ENCODE measurements at regions of chr21 and their contacts with region 1.

Region 1: GRCh38 chr21:17780539-17780938 is 38.6 kb downstream of the C21orf91 start:
- DNase-seq: peak in 1 of 2 donors; percentile 86
- ATAC-seq: peak; percentile 53 to 75 (median 71)
- H3K4me3 ChIP-seq: no peak overlapping the region
- H3K4me3 Mint-ChIP-seq: peak overlapping the region; percentile 49
- H3K27ac ChIP-seq: peak overlapping the region; percentile 59
- H3K27ac Mint-ChIP-seq: peak overlapping the region; percentile 91 to 92
- H3K4me1 ChIP-seq: peaks cover 47% of the 10 kb centered on the region
- H3K4me1 Mint-ChIP-seq: peaks cover 77 to 78% of the 10 kb centered on the region in 2 donors
- H3K27me3 ChIP-seq: no peaks in the 10 kb centered on the region
- H3K27me3 Mint-ChIP-seq: no peaks in the 10 kb centered on the region
- CTCF ChIP-seq: no peak

Region 2: DNA sequence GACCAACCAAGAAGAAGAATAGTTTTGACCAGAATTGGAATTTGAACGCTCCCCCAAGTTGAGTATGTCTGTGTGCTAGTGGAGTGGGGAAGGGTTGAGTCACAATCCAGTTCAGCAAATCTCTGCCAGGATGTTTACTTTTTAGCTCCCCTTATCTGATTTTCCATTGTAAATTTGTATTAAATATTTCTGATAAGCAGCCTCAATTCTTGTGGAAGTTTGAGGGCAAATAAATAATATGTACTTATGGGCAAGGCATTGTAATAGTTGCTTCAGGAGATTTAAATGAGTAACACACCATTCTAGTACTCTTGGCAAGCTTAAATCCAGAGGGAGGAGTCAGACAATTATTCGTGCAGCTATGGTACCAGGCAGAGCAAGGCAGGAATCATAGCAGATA is 253.3 kb before region 1 on chr21:
- intact Hi-C with region 1: no loop called
- DNase-seq: no peak
- ATAC-seq: no peak
- H3K4me3 ChIP-seq: no peak overlapping the region
- H3K4me3 Mint-ChIP-seq: no peak overlapping the region
- H3K27ac ChIP-seq: no peak overlapping the region
- H3K27ac Mint-ChIP-seq: no peak overlapping the region
- H3K4me1 ChIP-seq: no peaks in the 10 kb centered on the region
- H3K4me1 Mint-ChIP-seq: no peaks in the 10 kb centered on the region
- H3K27me3 ChIP-seq: no peaks in the 10 kb centered on the region
- H3K27me3 Mint-ChIP-seq: peaks cover 0 to 6% of the 10 kb centered on the region in 2 donors
- CTCF ChIP-seq: no peak

Region 3: GRCh38 chr21:17611414-17612022 is 169.0 kb before region 1 on chr21:
- intact Hi-C with region 1: loop called (anchors 5 kb)
- DNase-seq: peak; percentile 74 to 92
- ATAC-seq: peak; percentile 57 to 71 (median 63)
- H3K4me3 ChIP-seq: peak overlapping the region; percentile 91
- H3K4me3 Mint-ChIP-seq: peak overlapping the region; percentile 95
- H3K27ac ChIP-seq: peak overlapping the region; percentile 77
- H3K27ac Mint-ChIP-seq: peak overlapping the region; percentile 91 to 99
- H3K4me1 ChIP-seq: peaks cover 19% of the 10 kb centered on the region
- H3K4me1 Mint-ChIP-seq: peaks cover 12 to 23% of the 10 kb centered on the region in 2 donors
- H3K27me3 ChIP-seq: no peaks in the 10 kb centered on the region
- H3K27me3 Mint-ChIP-seq: no peaks in the 10 kb centered on the region
- CTCF ChIP-seq: no peak

Region 4: DNA sequence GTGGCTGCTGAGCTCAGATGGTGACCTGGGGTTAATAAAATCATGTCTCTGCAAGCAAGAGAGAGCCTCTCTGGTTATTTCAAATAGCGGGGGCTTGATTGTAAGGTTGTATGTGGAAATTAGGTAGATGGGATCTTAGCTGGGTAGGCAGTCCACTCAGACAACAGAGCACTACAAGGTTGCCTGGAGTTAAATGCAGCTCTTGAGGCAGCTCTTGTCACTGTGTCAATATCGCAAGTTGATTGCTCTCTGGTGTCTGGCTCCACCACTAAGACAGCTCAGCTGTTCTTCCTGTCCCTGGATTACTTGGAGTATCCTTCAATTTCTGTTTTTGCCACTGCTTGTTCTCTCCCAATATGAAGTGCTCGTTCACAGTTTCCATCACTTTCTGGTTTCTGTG is 55.2 kb before region 1 on chr21:
- intact Hi-C with region 1: no loop called
- DNase-seq: no peak
- ATAC-seq: no peak
- H3K4me3 ChIP-seq: no peak overlapping the region
- H3K4me3 Mint-ChIP-seq: no peak overlapping the region
- H3K27ac ChIP-seq: no peak overlapping the region
- H3K27ac Mint-ChIP-seq: no peak overlapping the region
- H3K4me1 ChIP-seq: no peaks in the 10 kb centered on the region
- H3K4me1 Mint-ChIP-seq: peaks cover 6% of the 10 kb centered on the region in 2 donors
- H3K27me3 ChIP-seq: no peaks in the 10 kb centered on the region
- H3K27me3 Mint-ChIP-seq: no peaks in the 10 kb centered on the region
- CTCF ChIP-seq: no peak

Region 5: DNA sequence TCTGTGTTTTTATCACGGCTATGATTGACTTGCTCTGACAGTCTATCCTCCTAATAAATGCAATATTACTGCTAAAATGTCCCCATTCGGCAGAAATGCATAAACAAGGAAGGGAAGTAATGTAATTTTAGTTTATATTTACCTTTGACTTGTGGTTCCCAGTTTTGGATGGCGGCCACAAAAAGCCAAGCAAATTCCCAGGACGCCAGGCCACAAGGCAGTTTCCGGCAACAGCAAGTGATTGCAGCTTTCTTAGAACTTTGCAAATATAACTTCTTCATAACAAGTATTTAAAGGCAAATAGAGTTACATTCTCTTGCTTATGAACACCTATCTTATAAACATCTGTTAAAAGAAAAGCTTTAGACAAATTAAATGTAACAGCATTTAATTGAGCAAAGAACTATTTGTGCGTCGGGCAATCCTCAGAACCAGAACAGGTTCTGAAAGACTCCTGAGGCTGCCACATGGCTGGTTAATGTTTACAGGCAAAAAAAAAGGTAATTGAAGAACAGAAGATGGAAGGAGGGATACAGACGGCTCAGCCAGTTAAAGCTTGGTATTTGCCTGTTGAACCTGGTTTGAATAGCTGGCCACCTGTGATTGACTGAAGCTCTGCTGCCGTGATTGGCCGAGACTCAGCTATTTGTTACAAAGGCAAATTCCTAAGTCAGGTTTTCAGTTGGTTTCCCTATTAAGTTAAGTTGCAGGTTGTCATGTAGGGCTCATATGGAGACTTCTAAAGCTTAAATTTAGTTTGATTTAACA is 42.2 kb before region 1 on chr21:
- intact Hi-C with region 1: no loop called
- DNase-seq: no peak
- ATAC-seq: no peak
- H3K4me3 ChIP-seq: no peak overlapping the region
- H3K4me3 Mint-ChIP-seq: no peak overlapping the region
- H3K27ac ChIP-seq: no peak overlapping the region
- H3K27ac Mint-ChIP-seq: no peak overlapping the region
- H3K4me1 ChIP-seq: no peaks in the 10 kb centered on the region
- H3K4me1 Mint-ChIP-seq: peaks cover 0 to 9% of the 10 kb centered on the region in 2 donors
- H3K27me3 ChIP-seq: no peaks in the 10 kb centered on the region
- H3K27me3 Mint-ChIP-seq: no peaks in the 10 kb centered on the region
- CTCF ChIP-seq: no peak

Region 6: DNA sequence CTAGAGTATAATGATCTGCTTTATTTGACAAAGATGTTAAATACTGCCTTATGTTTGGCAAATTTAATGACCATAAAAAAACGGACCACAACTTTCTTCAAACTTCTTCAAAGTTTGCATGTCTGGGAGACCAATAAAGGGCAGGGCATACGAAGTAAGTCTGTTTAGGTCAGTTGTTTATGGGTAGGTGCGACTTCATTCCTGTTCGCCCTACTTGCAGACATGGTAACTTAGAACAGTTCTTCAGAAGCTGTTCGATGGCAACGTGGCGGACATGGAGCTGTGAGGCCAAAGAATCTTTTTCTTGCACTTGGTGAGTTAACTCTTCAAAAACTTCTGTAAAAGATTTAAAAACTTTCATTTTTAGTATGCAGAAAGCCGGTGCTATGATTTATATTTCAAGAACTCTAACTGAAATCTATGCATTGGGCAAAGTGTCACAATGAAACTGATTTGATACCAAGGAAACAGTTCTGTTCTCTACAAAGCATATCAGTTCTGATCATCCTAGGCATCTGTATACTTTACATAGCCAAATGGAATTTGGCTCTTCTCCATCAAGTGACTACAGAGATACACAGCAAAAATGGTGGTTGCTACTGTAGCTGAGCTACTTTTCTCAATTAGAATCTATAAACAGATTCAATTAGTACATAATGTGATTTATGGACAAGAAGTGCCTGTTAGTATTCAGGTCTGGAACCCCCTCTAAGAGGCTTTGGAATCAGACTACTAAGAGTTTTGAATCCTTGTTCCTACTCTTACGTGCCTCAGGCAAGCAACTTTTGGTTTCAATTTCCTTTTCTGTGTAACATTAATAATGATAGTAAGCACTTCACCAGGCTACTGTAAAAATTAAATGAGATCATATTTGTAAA is 12.9 kb after region 1 on chr21:
- intact Hi-C with region 1: loop called (anchors 2 kb)
- DNase-seq: peak in 1 of 2 donors; percentile 65
- ATAC-seq: peak; percentile 72 to 79 (median 76)
- H3K4me3 ChIP-seq: peak overlapping the region; percentile 35
- H3K4me3 Mint-ChIP-seq: peak overlapping the region; percentile 83
- H3K27ac ChIP-seq: peak overlapping the region; percentile 81
- H3K27ac Mint-ChIP-seq: peak overlapping the region; percentile 82 to 91
- H3K4me1 ChIP-seq: peaks cover 14% of the 10 kb centered on the region
- H3K4me1 Mint-ChIP-seq: peaks cover 36 to 57% of the 10 kb centered on the region in 2 donors
- H3K27me3 ChIP-seq: no peaks in the 10 kb centered on the region
- H3K27me3 Mint-ChIP-seq: no peaks in the 10 kb centered on the region
- CTCF ChIP-seq: no peak

Region 7: GRCh38 chr21:17803536-17803935 is 23.0 kb after region 1 on chr21:
- intact Hi-C with region 1: no loop called
- DNase-seq: no peak
- ATAC-seq: no peak
- H3K4me3 ChIP-seq: no peak overlapping the region
- H3K4me3 Mint-ChIP-seq: no peak overlapping the region
- H3K27ac ChIP-seq: no peak overlapping the region
- H3K27ac Mint-ChIP-seq: peak overlapping the region; percentile 40 to 67
- H3K4me1 ChIP-seq: no peaks in the 10 kb centered on the region
- H3K4me1 Mint-ChIP-seq: peaks cover 52 to 60% of the 10 kb centered on the region in 2 donors
- H3K27me3 ChIP-seq: no peaks in the 10 kb centered on the region
- H3K27me3 Mint-ChIP-seq: no peaks in the 10 kb centered on the region
- CTCF ChIP-seq: no peak

Measured in natural killer cell (primary cell).